Pancreas (tissue), 10 donors: ENCODE measurements at regions of chr4 and their contacts with region 1.

Region 1: DNA sequence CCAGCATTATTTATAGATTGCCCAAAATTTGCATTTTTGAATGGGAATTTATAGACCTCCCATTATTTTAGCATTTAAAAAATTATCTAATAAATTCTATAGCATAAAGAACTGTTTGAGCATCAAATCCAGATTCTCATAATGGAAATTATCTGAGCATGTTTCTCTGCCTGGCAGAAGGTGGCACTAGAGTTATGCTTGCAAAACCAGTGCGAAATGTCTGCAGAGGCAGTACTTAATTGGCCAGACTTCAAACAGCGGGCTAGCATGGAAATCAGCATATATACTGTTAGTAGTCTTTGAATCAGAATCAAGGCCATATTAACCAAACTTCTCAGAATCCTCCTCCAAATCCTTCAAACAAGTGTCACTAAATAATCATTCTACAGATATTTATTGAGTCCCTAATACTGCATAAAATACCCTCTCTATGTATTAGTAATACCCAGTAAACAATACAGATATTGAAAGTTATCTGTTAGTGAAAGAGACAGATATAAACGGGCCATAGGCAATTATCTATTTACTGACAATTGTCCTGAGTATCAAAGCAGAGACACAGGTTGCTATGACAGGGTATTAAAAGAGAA is 78.7 kb upstream of the DCLK2 start:
- DNase-seq: peak in 3 of 6 donors; percentile 16 to 30 (median 28)
- ATAC-seq: peak; percentile 70 to 89 (median 82)
- H3K4me3 ChIP-seq: no peak overlapping the region
- H3K27ac ChIP-seq: no peak overlapping the region
- H3K4me1 ChIP-seq: peaks cover 0 to 5% (median 2%) of the 10 kb centered on the region in 3 donors
- H3K27me3 ChIP-seq: no peaks in the 10 kb centered on the region
- CTCF ChIP-seq: peak in 3 of 4 donors; percentile 27 to 35 (median 31)

Region 2: DNA sequence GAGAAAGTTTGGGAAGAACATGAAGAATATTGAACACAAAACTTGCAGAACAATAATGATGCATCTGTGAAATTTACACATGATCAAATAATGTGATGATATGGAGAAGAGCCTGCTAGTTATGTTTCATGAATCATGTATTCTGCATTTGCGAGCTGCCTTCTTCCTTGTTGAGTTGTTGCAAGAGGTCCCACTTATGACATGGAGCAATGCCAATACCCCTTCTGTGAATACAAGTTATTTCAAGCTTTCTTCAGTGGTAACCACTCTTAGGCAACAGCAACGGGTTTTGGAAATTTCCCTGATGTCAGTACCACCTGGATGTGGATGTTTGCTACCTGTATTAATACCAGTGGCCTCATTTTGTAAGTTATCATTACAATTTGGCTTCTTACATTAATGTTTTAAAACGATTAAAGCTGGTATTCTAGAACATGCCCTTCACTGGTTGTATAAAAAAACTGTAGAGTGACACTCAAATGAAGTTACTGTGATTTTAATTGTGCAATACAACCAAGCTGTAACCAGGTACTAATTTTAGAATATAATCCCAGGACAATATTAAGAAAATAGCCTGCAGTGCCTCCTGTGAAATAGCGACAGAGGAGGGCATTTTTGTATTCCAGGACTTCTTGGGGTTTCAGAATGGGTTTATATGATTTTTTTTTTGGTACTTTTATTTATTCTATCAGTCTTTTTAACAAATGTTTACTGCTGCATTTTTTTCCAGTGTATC is 209.2 kb before region 1 on chr4:
- intact Hi-C with region 1: no loop called
- DNase-seq: no peak
- ATAC-seq: no peak
- H3K4me3 ChIP-seq: no peak overlapping the region
- H3K27ac ChIP-seq: no peak overlapping the region
- H3K4me1 ChIP-seq: no peaks in the 10 kb centered on the region
- H3K27me3 ChIP-seq: no peaks in the 10 kb centered on the region
- CTCF ChIP-seq: no peak

Region 3: DNA sequence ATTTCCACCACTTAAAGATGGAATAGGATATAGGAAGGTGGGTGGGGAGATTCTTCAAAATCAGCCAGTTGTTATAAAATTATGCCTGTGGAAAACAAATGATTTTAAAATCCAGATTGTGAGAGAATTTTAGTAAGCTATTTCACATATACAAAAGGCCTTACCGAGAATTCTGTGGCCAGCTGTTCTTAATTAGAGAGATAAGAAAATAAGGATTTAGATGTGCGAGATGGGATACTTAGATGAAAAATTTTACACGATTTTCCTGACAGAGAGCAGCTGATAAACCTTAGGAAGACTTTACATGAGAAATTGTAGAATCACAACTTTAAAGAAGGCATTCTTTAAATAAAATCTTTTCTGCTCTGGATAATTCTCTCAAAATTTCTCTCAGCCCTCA is 89.4 kb before region 1 on chr4:
- intact Hi-C with region 1: no loop called
- DNase-seq: no peak
- ATAC-seq: no peak
- H3K4me3 ChIP-seq: no peak overlapping the region
- H3K27ac ChIP-seq: no peak overlapping the region
- H3K4me1 ChIP-seq: no peaks in the 10 kb centered on the region
- H3K27me3 ChIP-seq: no peaks in the 10 kb centered on the region
- CTCF ChIP-seq: no peak

Region 4: GRCh38 chr4:150237110-150237857 is 237.7 kb after region 1 on chr4:
- intact Hi-C with region 1: loop called in 2 of 3 experiments (anchors 10 kb)
- DNase-seq: no peak
- ATAC-seq: peak in 2 of 4 donors; percentile 30 to 65
- H3K4me3 ChIP-seq: no peak overlapping the region
- H3K27ac ChIP-seq: no peak overlapping the region
- H3K4me1 ChIP-seq: no peaks in the 10 kb centered on the region
- H3K27me3 ChIP-seq: no peaks in the 10 kb centered on the region
- CTCF ChIP-seq: no peak

Region 5: DNA sequence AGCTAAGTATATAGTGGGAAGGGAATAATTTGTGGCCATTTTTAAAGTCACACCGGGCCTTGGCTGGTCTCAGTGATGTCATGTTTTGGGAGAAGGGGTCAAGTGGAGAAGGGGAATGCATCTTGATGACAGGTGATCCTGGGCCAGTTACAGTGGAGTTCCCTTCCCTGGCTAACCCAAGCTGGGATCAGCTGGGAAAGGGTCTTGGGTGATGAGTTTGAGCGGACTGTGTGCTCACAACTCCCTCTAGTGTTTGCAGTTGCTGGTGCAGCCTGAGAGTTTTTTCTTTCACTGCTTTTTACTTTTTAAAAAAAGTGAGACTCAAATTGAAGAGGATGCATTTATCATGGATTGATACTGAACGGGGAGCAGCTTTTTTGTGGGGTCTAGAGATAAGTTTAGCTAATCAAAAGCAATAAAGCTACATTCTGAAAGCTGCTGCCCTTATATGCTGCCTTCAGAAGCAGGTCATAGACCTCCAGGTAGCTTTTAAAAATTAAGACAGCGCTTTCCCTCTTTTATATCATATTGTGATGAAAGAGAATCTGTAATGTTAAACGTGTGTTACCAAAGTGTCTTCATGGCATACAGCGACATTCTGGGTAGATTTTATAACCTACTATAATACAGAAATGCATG is 243.4 kb after region 1 on chr4:
- intact Hi-C with region 1: loop called in 2 of 3 experiments (anchors 10 kb)
- DNase-seq: peak in 1 of 6 donors; percentile 41
- ATAC-seq: peak; percentile 59 to 85 (median 71)
- H3K4me3 ChIP-seq: no peak overlapping the region
- H3K27ac ChIP-seq: no peak overlapping the region
- H3K4me1 ChIP-seq: peaks cover 3 to 11% (median 8%) of the 10 kb centered on the region in 3 donors
- H3K27me3 ChIP-seq: no peaks in the 10 kb centered on the region
- CTCF ChIP-seq: peak; percentile 67 to 91 (median 80)

Region 6: DNA sequence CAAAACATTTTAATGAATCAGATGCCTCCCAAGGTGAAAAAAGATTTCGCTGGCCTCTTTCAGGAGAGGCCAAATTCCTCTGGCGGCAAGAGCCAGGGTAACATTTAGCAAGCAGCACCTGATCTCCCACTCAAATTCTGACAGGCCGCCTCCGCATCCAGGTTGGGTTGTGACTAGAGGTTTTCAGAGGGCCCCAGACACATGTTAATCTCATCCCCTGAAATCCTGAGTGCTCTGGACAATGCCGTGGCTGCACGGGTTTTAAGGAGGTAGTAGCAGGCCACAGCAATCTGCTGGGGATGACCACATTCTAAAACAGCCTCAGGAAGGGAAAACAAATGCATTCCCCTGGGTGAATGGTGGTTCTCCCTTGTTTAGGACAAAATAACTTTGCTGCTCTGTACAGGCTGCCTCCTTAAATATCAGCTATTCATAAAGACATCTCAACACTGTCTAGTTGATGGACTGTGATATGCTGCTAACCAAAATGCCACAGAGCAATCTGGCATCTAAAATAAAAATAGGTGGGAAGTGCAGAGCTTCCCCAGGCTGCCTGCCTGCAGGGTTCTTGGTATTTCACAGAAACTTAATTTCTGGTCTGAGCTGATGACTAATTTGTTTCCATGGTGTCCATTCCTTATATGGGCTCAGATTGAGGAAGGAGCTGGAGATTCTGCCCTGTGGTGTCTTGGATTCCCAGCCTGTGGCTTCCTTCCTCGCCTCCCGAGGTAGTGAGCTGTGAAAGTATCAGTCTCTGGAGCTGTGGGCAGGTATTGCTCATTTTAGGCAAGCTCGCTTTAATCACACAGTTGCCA is 280.7 kb after region 1 on chr4:
- intact Hi-C with region 1: no loop called
- DNase-seq: no peak
- ATAC-seq: peak in 2 of 4 donors; percentile 65 to 67
- H3K4me3 ChIP-seq: no peak overlapping the region
- H3K27ac ChIP-seq: no peak overlapping the region
- H3K4me1 ChIP-seq: no peaks in the 10 kb centered on the region
- H3K27me3 ChIP-seq: no peaks in the 10 kb centered on the region
- CTCF ChIP-seq: no peak